ENCODE measurements at regions of chr9 and their contacts with region 1.

Region 1: DNA sequence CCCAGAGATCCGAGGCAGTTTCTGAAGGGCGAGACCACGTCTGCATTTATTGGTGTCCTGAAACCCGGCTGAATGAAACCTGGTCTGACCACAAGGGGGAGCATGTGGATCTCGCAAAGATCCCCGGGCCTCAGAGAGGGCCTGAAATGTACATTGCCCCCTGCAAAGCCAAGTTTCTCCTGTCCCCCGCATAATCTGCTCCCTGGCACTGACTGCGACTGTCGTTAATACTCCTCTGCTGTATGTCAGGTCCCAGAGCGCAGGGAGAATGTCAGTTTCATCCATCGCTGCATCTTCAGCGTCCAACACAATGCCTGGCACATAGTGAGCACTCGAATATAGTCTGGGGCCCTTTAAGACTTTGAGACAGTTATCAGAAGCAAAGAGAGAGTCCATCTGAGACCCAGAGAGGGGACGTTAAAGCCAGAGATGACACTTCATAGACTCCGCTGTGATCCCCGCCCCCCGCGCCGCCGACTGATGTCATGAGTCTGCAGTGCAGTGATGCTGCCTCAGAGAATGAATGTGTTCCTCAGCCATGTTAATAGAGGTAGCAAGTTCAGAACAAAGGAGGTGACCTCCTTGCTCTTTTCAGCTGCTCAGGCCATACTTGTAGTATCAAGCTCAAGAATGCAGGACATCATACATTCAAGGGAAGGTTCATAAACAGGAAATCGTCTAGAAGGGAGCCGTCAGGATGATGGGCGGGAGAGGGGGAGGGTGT is 74.5 kb upstream of the BARHL1 start:
- DNase-seq: no peak

Region 2: DNA sequence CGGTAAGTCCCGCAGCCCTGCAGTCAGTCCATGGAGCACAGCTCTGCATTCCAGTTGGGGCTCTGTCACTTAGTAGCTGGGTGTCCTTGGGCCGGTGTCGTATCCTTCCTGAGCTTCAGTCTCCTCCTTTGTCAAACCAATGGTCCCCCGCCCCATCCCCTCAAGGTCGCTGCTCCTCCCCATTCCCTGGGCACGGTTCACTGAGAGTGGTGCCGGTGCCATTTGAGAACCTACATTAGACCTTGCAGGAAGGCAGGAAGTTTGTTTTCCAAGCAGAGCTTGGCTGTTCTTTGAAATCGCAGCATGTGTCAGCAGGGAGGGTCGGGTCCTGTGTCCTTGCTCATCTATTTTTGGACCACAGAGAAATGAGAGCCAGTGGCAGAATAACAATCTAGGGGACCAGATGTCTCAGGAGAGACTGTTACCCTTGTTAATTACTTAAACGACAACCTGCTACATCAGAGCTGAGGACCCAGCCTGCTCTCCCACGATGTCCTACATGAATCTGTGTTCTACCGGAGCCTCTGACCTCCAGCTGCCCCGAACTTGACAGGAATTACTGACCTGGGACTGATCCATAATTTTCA is 52.8 kb after region 1 on chr9:
- intact Hi-C with region 1: no loop called
- DNase-seq: no peak

Region 3: GRCh38 chr9:132575005-132575609 is 67.2 kb after region 1 on chr9:
- intact Hi-C with region 1: loop called (anchors 1 kb)
- DNase-seq: peak; percentile 77

Region 4: GRCh38 chr9:132800038-132800648 is 292.2 kb after region 1 on chr9:
- intact Hi-C with region 1: loop called (anchors 1 kb)
- DNase-seq: peak; percentile 81